Activated CD4-positive, alpha-beta memory T cell treated with anti-CD3 and anti-CD28 coated beads for 36 hours (primary cell): ENCODE measurements at regions of chr3 and their contacts with region 1.

Region 1: GRCh38 chr3:142447852-142448823 is at the start of gene XRN1:
- DNase-seq: peak; percentile 97
- H3K4me3 Mint-ChIP-seq: peak within 1 kb of the TSS; percentile 95
- H3K27ac Mint-ChIP-seq: peak within 1 kb of the TSS; percentile 96
- H3K4me1 Mint-ChIP-seq: peaks cover 31% of the 10 kb centered on the region
- H3K27me3 Mint-ChIP-seq: no peaks in the 10 kb centered on the region
- total RNA-seq, gene XRN1: 58.4 to 67.8 TPM

Region 2: DNA sequence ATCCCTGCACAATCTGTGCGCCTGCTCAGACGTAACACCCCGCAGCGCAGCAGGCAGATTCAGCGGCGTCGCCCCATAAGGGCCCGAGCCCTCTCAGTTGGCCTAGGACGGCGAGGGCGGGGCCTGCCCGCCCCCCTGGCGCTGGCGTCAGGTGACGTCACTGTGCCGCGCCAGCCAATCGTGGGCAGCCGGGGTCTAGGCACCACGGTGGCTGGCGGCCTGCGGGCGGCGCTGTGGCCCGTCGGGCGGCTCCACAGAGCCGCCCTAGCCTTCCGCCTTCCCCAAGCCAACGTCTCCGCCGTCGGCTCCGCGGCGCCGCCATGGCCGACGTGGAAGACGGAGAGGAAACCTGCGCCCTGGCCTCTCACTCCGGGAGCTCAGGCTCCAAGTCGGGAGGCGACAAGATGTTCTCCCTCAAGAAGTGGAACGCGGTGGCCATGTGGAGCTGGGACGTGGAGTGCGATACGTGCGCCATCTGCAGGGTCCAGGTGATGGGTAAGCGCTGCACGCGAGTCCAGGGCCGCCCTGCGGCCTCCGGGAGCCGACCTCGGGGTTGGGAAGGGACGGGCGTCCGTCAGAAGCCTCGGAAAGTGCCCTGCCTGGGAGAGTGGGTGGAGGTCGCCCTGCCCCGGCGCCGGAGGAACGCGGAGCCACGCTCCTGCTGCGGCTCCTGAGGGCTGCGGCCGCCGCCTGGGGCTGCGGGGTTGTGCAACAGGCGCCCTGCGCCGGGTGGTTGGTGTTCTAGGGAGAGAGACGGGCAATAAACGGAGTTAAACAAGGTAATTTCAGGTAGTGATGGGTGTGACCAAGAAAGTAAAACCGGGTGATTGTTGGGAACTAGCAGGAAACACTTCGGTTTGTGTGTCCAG is 709.9 kb before region 1 on chr3 and contains the start of gene RNF7:
- CTCF ChIA-PET with region 1: no interaction called
- POLR2A ChIA-PET with region 1: no interaction called
- intact Hi-C with region 1: loop called (anchors 2 kb)
- DNase-seq: peak; percentile 98
- H3K4me3 Mint-ChIP-seq: peak within 1 kb of the TSS; percentile 100
- H3K27ac Mint-ChIP-seq: peak within 1 kb of the TSS; percentile 99
- H3K4me1 Mint-ChIP-seq: peaks cover 33% of the 10 kb centered on the region
- H3K27me3 Mint-ChIP-seq: no peaks in the 10 kb centered on the region
- total RNA-seq, gene RNF7: 54.0 to 58.9 TPM

Region 3: GRCh38 chr3:142226484-142226883 is 221.7 kb before region 1 on chr3:
- CTCF ChIA-PET with region 1: no interaction called
- POLR2A ChIA-PET with region 1: no interaction called
- intact Hi-C with region 1: loop called (anchors 5 kb)
- DNase-seq: no peak
- H3K4me3 Mint-ChIP-seq: peak overlapping the region; percentile 29
- H3K27ac Mint-ChIP-seq: no peak overlapping the region
- H3K4me1 Mint-ChIP-seq: peaks cover 12% of the 10 kb centered on the region
- H3K27me3 Mint-ChIP-seq: no peaks in the 10 kb centered on the region

Region 4: GRCh38 chr3:142492184-142492583 is 44.0 kb after region 1 on chr3:
- CTCF ChIA-PET with region 1: no interaction called
- POLR2A ChIA-PET with region 1: no interaction called
- intact Hi-C with region 1: no loop called
- DNase-seq: no peak
- H3K4me3 Mint-ChIP-seq: no peak overlapping the region
- H3K27ac Mint-ChIP-seq: no peak overlapping the region
- H3K4me1 Mint-ChIP-seq: no peaks in the 10 kb centered on the region
- H3K27me3 Mint-ChIP-seq: no peaks in the 10 kb centered on the region

Region 5: DNA sequence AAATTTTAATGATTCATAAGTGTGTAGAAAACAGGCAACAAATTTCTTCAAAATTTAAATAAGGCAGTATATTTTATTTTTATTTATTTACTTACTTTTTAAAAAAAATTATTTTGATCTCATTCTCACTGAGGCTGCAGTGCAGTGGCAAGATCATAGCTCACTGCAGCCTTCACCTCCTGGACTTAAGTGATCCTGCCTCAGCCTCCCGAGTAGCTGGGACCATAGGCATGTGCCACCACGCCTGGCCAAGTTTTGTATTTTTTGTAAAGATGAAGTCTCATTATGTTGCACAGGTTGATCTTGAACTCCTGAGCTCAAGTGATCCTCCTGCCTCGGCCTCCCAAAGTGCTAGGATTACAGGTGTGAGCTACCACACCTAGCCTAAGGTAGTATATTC is 60.9 kb after region 1 on chr3:
- CTCF ChIA-PET with region 1: no interaction called
- POLR2A ChIA-PET with region 1: no interaction called
- intact Hi-C with region 1: loop called (anchors 1 kb)
- DNase-seq: peak; percentile 13
- H3K4me3 Mint-ChIP-seq: peak overlapping the region; percentile 69
- H3K27ac Mint-ChIP-seq: peak overlapping the region; percentile 85
- H3K4me1 Mint-ChIP-seq: peaks cover 10% of the 10 kb centered on the region
- H3K27me3 Mint-ChIP-seq: no peaks in the 10 kb centered on the region

Region 6: DNA sequence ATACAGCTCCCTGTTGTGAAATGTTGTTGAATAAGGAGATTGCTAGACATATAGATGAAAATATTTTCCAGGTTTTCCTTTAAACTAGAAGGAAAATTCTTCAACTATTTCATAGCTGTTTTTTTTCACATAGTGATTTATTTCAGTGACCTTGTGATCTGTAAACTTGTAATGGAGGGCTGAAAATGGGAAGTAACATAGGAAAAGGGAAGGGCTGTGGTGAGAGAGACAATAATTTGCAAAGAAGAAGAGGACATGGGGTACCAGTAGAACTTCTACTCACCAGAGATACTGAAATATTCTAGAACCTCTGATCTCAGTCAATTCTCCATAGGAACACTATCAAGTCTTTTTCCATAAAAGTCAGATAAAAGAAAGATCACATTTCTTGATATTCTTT is 208.4 kb after region 1 on chr3:
- CTCF ChIA-PET with region 1: no interaction called
- POLR2A ChIA-PET with region 1: no interaction called
- intact Hi-C with region 1: no loop called
- DNase-seq: no peak
- H3K4me3 Mint-ChIP-seq: no peak overlapping the region
- H3K27ac Mint-ChIP-seq: no peak overlapping the region
- H3K4me1 Mint-ChIP-seq: no peaks in the 10 kb centered on the region
- H3K27me3 Mint-ChIP-seq: no peaks in the 10 kb centered on the region

Region 7: DNA sequence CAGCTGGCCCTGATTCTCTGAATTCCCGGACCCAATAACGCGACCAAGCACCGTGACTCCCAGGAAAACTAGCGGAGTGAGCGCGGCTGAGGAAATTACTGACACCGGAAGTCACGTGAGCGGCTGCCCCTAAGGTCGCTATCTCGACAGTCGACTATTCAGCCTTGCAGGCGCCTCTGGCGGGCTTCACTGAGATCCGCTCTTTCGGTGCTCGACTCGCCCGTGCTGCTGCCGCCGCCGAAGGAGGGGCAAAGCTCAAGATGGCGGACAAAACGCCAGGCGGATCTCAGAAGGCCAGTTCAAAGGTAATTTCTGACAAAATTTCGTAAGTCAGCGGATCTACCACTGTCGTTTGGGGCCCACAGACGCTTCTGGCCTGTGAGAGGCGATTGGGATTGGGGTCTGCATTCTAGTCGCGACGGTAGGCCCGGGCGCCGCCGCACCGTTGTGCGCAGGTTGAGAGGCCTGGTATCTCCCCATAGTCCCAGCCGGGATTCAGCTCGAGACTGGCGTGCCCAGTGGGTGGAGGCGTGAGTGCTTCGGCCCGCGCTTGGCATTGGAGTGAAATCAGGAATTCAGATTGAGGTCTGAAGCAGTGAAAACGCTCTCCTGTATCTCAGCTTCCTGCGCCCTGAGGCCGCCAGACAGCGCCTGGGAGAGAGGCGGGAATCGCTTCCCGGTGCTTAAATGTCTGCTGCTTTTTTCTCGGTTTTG is 553.4 kb after region 1 on chr3 and contains the start of gene U2SURP:
- CTCF ChIA-PET with region 1: no interaction called
- POLR2A ChIA-PET with region 1: interaction called, 8 read pairs
- intact Hi-C with region 1: loop called (anchors 1 kb)
- DNase-seq: peak; percentile 95
- H3K4me3 Mint-ChIP-seq: peak within 1 kb of the TSS; percentile 88
- H3K27ac Mint-ChIP-seq: peak within 1 kb of the TSS; percentile 96
- H3K4me1 Mint-ChIP-seq: peaks cover 34% of the 10 kb centered on the region
- H3K27me3 Mint-ChIP-seq: no peaks in the 10 kb centered on the region
- total RNA-seq, gene U2SURP: 178 to 182 TPM